ENCODE measurements at regions of chr1 and their contacts with region 1.

Region 1: DNA sequence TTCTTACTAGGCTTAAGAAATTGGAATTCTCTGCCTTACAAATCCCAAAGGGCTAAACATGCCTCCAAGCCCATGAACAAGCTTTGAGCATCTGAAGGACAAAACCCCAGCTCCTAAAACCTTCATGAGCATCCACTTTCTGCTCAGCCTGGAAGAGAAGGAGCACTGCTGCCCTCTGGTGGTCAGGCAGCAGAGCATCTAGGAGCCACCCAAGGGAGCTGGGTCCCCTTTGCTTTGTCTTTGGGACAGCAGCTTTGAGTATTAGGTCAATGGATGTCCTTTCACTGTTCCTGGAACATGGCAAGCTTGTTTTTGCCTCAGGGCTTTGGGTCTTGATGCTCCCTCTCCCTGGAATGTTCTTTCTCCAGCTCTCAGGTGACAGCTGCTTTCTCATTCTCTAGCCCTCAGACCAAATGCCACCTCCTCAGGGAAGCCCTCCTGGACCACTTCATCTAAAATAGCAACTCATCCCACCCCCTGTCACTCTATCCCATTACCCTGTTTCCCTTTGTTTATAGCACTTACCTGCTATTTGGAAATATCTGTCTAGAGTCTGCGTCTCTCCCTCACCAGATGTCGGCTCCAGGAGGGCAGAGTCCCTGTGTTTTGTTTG is 25.7 kb downstream of the RAB7B start:
- DNase-seq: peak; percentile 74
- ATAC-seq: peak; percentile 88
- H3K4me3 Mint-ChIP-seq: no peak overlapping the region
- H3K27ac Mint-ChIP-seq: no peak overlapping the region
- H3K4me1 Mint-ChIP-seq: no peaks in the 10 kb centered on the region
- H3K27me3 Mint-ChIP-seq: peaks cover 1% of the 10 kb centered on the region
- CTCF ChIP-seq: peak; percentile 87

Region 2: GRCh38 chr1:205591522-205592351 is 385.8 kb before region 1 on chr1:
- CTCF ChIA-PET with region 1: interaction called, 10 read pairs
- POLR2A ChIA-PET with region 1: interaction called, 3 read pairs
- intact Hi-C with region 1: no loop called
- DNase-seq: peak; percentile 95
- ATAC-seq: peak; percentile 93
- H3K4me3 Mint-ChIP-seq: peak overlapping the region; percentile 84
- H3K27ac Mint-ChIP-seq: peak overlapping the region; percentile 93
- H3K4me1 Mint-ChIP-seq: peaks cover 38% of the 10 kb centered on the region
- H3K27me3 Mint-ChIP-seq: no peaks in the 10 kb centered on the region
- CTCF ChIP-seq: peak; percentile 96

Region 3: GRCh38 chr1:205783904-205784303 is 193.6 kb before region 1 on chr1:
- CTCF ChIA-PET with region 1: interaction called, 145 read pairs
- POLR2A ChIA-PET with region 1: no interaction called
- intact Hi-C with region 1: no loop called
- DNase-seq: no peak
- ATAC-seq: no peak
- H3K4me3 Mint-ChIP-seq: no peak overlapping the region
- H3K27ac Mint-ChIP-seq: no peak overlapping the region
- H3K4me1 Mint-ChIP-seq: peaks cover 7% of the 10 kb centered on the region
- H3K27me3 Mint-ChIP-seq: no peaks in the 10 kb centered on the region
- CTCF ChIP-seq: no peak

Region 4: DNA sequence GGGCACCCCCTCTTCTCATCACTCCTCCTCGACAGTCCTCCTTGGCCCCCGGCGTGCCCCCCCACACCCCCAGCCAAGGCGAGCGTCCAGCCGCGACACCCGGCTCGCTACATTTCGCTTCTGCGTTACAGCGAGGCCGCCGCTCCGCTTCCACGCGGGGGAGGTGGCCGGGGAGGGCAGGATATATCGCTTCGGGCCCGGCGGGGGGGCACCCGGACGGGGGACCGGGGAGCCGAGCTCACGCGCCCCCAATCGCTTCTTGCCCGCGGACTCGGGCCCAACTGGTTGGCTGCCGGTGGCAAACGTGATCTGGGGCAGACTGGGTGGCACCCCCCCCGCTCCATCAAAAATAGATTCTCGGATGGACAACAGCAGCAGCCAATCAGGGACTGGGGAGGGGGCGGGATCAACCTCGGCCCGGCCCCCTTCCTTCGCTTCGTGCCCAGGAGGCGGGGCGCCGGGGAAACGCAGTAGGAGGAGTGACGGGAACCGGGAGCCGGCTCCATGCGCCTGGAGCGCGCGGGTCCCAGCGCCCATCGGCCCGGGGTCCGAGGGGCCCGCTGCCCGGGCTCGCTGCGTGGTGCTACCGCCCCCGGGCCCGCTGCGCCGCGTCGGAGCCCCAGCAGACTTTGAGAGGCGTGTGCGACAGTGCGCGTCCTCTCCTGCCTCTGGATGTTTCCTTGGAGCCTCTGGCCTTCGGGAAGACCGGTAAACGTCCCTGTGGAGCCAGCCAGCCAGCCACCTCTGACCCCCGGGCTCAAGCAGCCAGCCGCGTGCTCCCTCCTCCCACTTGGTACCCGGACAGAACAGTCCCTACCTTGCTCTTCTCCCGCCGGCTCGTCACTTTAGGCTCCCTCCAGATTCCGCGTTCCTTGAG is 164.4 kb before region 1 on chr1 and contains the start of gene SLC41A1:
- CTCF ChIA-PET with region 1: interaction called, 16 read pairs
- POLR2A ChIA-PET with region 1: no interaction called
- intact Hi-C with region 1: no loop called
- DNase-seq: peak; percentile 96
- ATAC-seq: peak; percentile 96
- H3K4me3 Mint-ChIP-seq: peak within 1 kb of the TSS; percentile 97
- H3K27ac Mint-ChIP-seq: peak within 1 kb of the TSS; percentile 88
- H3K4me1 Mint-ChIP-seq: peaks cover 52% of the 10 kb centered on the region
- H3K27me3 Mint-ChIP-seq: no peaks in the 10 kb centered on the region
- CTCF ChIP-seq: no peak
- total RNA-seq, gene SLC41A1: 33.6 to 35.3 TPM

Region 5: GRCh38 chr1:205930799-205931281 is 46.7 kb before region 1 on chr1:
- CTCF ChIA-PET with region 1: interaction called, 24 read pairs
- POLR2A ChIA-PET with region 1: no interaction called
- intact Hi-C with region 1: no loop called
- DNase-seq: no peak
- ATAC-seq: no peak
- H3K4me3 Mint-ChIP-seq: no peak overlapping the region
- H3K27ac Mint-ChIP-seq: no peak overlapping the region
- H3K4me1 Mint-ChIP-seq: no peaks in the 10 kb centered on the region
- H3K27me3 Mint-ChIP-seq: peaks cover 10% of the 10 kb centered on the region
- CTCF ChIP-seq: no peak

Region 6: DNA sequence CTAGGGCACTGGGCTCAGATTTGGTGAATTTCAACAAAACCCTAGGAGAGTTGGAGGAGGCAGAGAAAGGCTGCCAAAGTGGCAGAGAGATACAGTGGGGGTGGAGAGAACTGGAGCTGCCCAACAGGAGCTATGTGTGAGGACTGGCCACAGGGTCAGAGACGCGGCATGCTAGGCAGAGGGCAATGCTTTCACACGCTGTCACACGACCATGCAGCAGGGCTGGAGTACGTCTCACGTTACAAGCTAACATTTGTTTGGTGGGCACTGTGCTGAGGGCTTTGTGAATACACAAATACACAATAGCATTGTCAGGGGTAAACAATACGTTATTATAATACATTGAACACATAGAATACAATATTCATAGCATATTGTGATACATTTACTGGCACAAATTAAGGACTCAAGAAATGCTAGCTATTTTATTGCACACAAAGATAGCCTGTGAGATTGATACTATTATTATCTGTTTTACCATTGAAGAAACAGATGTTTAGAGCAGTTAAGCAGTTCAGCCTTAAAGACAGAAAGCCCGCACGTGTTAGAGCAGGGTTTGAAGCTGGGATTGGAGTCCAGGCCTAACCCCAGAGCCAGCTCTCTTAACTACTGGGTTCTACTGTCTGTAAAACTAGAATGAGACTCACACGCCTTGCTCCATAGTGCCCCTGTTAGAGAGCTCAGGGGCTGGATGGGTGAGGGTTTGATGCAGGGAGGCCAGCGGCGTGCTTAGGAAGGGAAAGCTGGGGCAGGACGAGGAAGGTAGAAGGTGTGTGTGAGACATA is 21.1 kb after region 1 on chr1:
- CTCF ChIA-PET with region 1: interaction called, 22 read pairs
- POLR2A ChIA-PET with region 1: no interaction called
- intact Hi-C with region 1: no loop called
- DNase-seq: no peak
- ATAC-seq: no peak
- H3K4me3 Mint-ChIP-seq: no peak overlapping the region
- H3K27ac Mint-ChIP-seq: no peak overlapping the region
- H3K4me1 Mint-ChIP-seq: peaks cover 12% of the 10 kb centered on the region
- H3K27me3 Mint-ChIP-seq: no peaks in the 10 kb centered on the region
- CTCF ChIP-seq: no peak

Region 7: DNA sequence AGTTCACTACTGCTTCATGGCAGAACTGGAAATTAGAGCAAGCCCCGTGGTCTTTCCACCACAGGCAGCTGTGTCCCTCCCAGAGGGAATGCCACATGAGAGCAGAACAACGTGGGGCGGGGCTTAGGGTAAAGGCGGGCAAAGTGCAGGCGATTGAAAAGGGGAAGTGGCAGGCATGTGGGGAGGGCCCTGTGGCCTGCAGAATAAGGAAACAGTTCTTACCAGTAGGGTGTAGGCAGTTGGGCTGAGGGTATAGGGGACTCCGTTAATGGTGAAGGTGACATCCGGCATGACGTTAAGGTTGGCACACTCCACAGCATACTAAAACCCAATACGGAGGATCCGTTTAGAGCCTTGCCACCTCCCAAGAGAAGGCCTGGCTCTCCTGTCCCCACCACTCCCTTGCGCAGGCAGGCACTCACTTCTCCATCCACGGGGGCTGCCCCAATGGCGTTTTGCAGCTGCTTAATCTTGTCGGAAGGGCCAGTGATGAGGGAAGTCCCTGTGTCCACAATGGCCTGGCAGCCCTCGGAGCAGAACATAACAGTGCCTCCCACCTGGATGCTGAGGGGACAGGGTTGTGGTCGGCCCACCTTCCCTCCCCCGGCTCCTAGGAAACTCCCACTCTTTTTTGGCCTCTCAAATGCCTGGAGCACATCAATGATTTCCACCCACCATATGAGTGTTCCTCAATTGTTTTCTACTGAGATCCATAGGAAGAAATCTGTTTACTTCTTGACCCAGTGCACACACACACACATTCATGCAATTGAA is 34.8 kb after region 1 on chr1:
- CTCF ChIA-PET with region 1: no interaction called
- POLR2A ChIA-PET with region 1: no interaction called
- intact Hi-C with region 1: no loop called
- DNase-seq: peak; percentile 64
- ATAC-seq: peak; percentile 85
- H3K4me3 Mint-ChIP-seq: no peak overlapping the region
- H3K27ac Mint-ChIP-seq: no peak overlapping the region
- H3K4me1 Mint-ChIP-seq: peaks cover 30% of the 10 kb centered on the region
- H3K27me3 Mint-ChIP-seq: no peaks in the 10 kb centered on the region
- CTCF ChIP-seq: no peak

Region 8: DNA sequence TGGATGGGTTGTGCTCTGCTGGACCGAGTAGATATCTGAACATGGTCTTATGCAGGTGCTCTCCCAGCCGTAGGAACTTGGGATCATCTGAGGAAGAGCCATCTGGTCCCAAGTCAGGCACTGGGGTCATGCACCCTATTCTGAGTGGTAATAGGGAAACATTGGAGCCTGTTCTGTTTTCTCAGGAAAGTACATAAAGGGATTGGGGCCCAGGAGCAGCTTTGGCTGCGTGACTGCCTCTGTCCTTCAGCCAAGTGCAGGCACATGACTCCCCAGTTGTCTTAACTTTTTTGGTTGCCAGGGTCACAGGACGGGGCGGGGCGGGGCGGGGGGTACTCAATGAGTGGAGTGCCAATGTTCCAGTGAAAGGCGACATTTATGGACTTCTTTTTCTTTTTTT is 1087.1 kb after region 1 on chr1:
- CTCF ChIA-PET with region 1: no interaction called
- POLR2A ChIA-PET with region 1: no interaction called
- intact Hi-C with region 1: no loop called
- DNase-seq: no peak
- ATAC-seq: no peak
- H3K4me3 Mint-ChIP-seq: no peak overlapping the region
- H3K27ac Mint-ChIP-seq: no peak overlapping the region
- H3K4me1 Mint-ChIP-seq: peaks cover 8% of the 10 kb centered on the region
- H3K27me3 Mint-ChIP-seq: no peaks in the 10 kb centered on the region
- CTCF ChIP-seq: no peak

Measured in activated CD8-positive, alpha-beta T cell treated with anti-CD3 and anti-CD28 coated beads for 36 hours (primary cell).